ENCODE measurements at regions of chr16 and their contacts with region 1.

Region 1: DNA sequence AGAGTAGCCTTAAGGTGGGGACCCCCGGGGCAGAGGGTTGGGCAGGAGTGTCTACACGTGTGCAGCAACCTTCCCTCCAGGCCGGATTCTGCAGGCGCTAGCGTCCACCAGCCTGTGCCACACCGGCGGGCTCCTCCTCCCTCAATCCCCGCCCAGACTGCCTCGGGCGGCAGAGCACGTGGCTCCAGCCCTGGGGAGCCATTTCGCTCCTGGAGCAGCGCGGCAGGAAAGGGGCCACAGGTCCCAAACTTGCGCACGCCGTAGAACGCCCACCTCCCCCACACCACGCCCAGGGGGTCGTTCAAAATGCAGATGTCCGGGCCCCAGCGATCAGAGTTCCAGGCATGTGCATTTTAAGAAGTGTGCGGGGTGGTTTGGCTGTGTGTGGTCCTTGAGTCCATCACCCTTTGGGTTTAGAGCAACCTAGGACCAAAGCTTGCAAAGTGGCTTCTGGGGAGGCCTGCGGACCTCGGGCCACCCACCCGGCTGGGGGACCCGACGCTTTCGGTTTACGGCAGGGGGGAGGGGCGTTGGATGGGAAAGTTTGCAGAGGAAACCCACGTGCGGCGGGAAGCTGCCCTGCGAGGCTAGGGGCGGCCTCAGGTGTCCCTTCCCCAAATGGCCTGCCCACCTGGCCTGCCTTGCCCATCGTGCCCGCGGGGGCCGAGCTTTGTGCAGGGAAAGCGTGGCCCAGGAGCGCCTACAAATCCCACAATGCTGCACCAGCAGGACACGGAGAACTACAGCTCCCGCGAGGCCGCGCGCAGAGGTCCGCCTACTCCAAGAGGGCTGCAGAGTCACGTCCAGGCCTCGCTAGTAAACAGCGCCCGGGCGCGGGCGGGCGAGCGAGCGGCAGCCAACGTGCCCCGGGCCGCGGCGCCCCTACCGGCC is 1.4 kb downstream of the TFAP4 start:
- DNase-seq: peak; percentile 94 to 96
- H3K4me3 ChIP-seq: peak overlapping the region; percentile 72
- H3K4me3 Mint-ChIP-seq: peak overlapping the region; percentile 88
- H3K27ac Mint-ChIP-seq: peak overlapping the region; percentile 90
- H3K4me1 ChIP-seq: peaks cover 6% of the 10 kb centered on the region
- H3K4me1 Mint-ChIP-seq: no peaks in the 10 kb centered on the region
- H3K27me3 ChIP-seq: no peaks in the 10 kb centered on the region
- H3K27me3 Mint-ChIP-seq: no peaks in the 10 kb centered on the region
- CTCF ChIP-seq: no peak

Region 2: GRCh38 chr16:4283441-4283840 is 12.0 kb after region 1 on chr16:
- CTCF ChIA-PET with region 1: interaction called, 13 read pairs
- POLR2A ChIA-PET with region 1: interaction called, 6 read pairs
- intact Hi-C with region 1: no loop called
- DNase-seq: no peak
- H3K4me3 ChIP-seq: no peak overlapping the region
- H3K4me3 Mint-ChIP-seq: no peak overlapping the region
- H3K27ac Mint-ChIP-seq: no peak overlapping the region
- H3K4me1 ChIP-seq: no peaks in the 10 kb centered on the region; the same call in 1 of the 2 replicates
- H3K4me1 Mint-ChIP-seq: peaks cover 14% of the 10 kb centered on the region
- H3K27me3 ChIP-seq: no peaks in the 10 kb centered on the region
- H3K27me3 Mint-ChIP-seq: no peaks in the 10 kb centered on the region
- CTCF ChIP-seq: no peak

Region 3: GRCh38 chr16:4315186-4316109 is 44.0 kb after region 1 on chr16 and contains the start of gene GLIS2:
- CTCF ChIA-PET with region 1: interaction called, 10 read pairs
- POLR2A ChIA-PET with region 1: interaction called, 10 read pairs
- intact Hi-C with region 1: loop called (anchors 1 kb)
- DNase-seq: peak; percentile 82 to 87
- H3K4me3 ChIP-seq: peak within 1 kb of the TSS; percentile 83
- H3K4me3 Mint-ChIP-seq: peak within 1 kb of the TSS; percentile 97
- H3K27ac Mint-ChIP-seq: peak within 1 kb of the TSS; percentile 99
- H3K4me1 ChIP-seq: peaks cover 36% of the 10 kb centered on the region
- H3K4me1 Mint-ChIP-seq: peaks cover 12% of the 10 kb centered on the region
- H3K27me3 ChIP-seq: no peaks in the 10 kb centered on the region
- H3K27me3 Mint-ChIP-seq: no peaks in the 10 kb centered on the region
- CTCF ChIP-seq: no peak
- total RNA-seq, gene GLIS2: 12.3 and 13.1 TPM in 2 replicates

Region 4: GRCh38 chr16:4377573-4378143 is 106.2 kb after region 1 on chr16:
- CTCF ChIA-PET with region 1: no interaction called
- POLR2A ChIA-PET with region 1: interaction called, 11 read pairs
- intact Hi-C with region 1: no loop called
- DNase-seq: no peak
- H3K4me3 ChIP-seq: no peak overlapping the region
- H3K4me3 Mint-ChIP-seq: no peak overlapping the region
- H3K27ac Mint-ChIP-seq: no peak overlapping the region
- H3K4me1 ChIP-seq: peaks cover 29% of the 10 kb centered on the region
- H3K4me1 Mint-ChIP-seq: no peaks in the 10 kb centered on the region
- H3K27me3 ChIP-seq: no peaks in the 10 kb centered on the region
- H3K27me3 Mint-ChIP-seq: no peaks in the 10 kb centered on the region
- CTCF ChIP-seq: peak in 1 of 2 experiments; percentile 17

Region 5: DNA sequence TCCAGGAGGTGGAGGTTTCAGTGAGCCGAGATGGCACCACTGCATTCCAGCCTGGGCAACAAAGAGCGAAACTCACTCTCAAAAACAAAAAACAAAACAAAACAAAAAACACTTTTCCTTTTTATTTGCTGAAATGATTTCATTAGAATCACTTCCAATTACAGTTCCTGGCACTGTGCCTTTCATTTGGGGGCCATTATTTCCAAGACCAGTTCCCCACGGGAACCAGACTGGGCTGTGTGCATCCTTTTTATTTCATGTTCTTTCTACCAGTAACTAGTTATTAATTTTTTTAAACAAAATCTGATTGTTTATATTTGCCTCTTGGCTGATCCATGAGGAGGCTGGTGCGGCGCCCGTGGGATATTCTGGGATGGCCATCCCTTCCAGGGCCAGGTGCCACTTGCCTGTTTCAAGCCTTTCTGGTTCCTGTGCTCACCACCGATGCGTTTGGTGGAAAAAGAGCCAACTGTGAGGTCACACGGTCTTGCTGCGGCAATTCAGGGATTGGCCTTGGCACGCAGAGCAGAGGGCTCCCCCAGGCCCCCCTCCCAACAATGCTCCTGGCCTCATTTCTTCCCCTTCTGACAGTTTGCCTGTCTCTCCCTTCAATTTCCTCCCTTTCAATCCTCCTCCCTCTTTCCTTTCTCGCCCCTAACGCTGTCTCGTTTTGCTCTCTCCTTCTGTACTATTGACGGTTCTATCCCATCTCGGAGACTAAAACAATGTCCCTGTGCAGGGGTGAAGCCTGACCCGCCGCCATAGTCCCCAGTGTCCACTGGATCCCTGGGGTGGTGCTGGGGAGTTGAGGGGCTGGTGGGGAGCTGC is 329.8 kb after region 1 on chr16:
- CTCF ChIA-PET with region 1: no interaction called
- POLR2A ChIA-PET with region 1: no interaction called
- intact Hi-C with region 1: no loop called
- DNase-seq: no peak
- H3K4me3 ChIP-seq: no peak overlapping the region
- H3K4me3 Mint-ChIP-seq: no peak overlapping the region
- H3K27ac Mint-ChIP-seq: no peak overlapping the region
- H3K4me1 ChIP-seq: no peaks in the 10 kb centered on the region
- H3K4me1 Mint-ChIP-seq: no peaks in the 10 kb centered on the region
- H3K27me3 ChIP-seq: no peaks in the 10 kb centered on the region
- H3K27me3 Mint-ChIP-seq: peaks cover 3% of the 10 kb centered on the region
- CTCF ChIP-seq: no peak

Measured in Caco-2 (cell line).